Dorsolateral prefrontal cortex (tissue), 120 donors: ENCODE measurements at regions of chr3 and their contacts with region 1.

Region 1: DNA sequence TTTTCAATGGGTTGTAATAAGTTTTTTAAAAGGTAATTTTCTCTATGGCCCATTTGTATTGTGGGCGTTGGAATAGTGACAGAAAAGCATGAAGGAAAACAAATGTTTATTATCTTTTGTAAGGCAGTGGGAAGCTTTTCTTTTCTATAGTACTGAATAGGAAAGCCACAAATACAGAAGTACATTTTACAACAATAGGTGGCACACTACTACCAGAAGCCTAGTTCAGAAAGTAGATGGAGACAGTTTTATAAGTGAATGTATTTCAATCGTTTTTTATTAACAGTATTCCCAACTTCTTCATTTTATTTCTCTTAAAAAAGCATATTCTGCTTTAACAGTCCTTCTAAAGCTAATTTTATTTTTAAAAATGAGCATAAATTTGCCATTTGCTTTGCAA is 296.7 kb downstream of the PTPRG start:
- DNase-seq: no peak
- H3K4me3 ChIP-seq: no peak overlapping the region
- H3K27ac ChIP-seq: peak overlapping the region in 1 of 59 donors; percentile 1
- H3K27me3 ChIP-seq: no peaks in the 10 kb centered on the region
- CTCF ChIP-seq: peak in 55 of 56 donors; percentile 25 to 75 (median 53)

Region 2: GRCh38 chr3:62188681-62189383 is 330.8 kb after region 1 on chr3:
- intact Hi-C with region 1: loop called in 1 of 2 experiments (anchors 5 kb)
- DNase-seq: peak; percentile 61 to 88 (median 77)
- H3K4me3 ChIP-seq: peak overlapping the region in 23 of 59 donors; percentile 2 to 43 (median 20)
- H3K27ac ChIP-seq: peak overlapping the region in 19 of 59 donors; percentile 1 to 65 (median 33)
- H3K27me3 ChIP-seq: no peaks in the 10 kb centered on the region
- CTCF ChIP-seq: peak; percentile 64 to 92 (median 86)